ENCODE measurements at regions of chr2 and their contacts with region 1.

Region 1: GRCh38 chr2:151819920-151820319 is 8.3 kb downstream of the ARL5A start:
- DNase-seq: no peak
- ATAC-seq: peak; percentile 97
- H3K4me3 Mint-ChIP-seq: no peak overlapping the region
- H3K27ac Mint-ChIP-seq: peak overlapping the region; percentile 73
- H3K4me1 Mint-ChIP-seq: peaks cover 61% of the 10 kb centered on the region
- H3K27me3 Mint-ChIP-seq: no peaks in the 10 kb centered on the region

Region 2: GRCh38 chr2:150832686-150833085 is 987.2 kb before region 1 on chr2:
- CTCF ChIA-PET with region 1: no interaction called
- POLR2A ChIA-PET with region 1: no interaction called
- intact Hi-C with region 1: no loop called
- DNase-seq: no peak
- ATAC-seq: no peak
- H3K4me3 Mint-ChIP-seq: no peak overlapping the region
- H3K27ac Mint-ChIP-seq: no peak overlapping the region
- H3K4me1 Mint-ChIP-seq: no peaks in the 10 kb centered on the region
- H3K27me3 Mint-ChIP-seq: no peaks in the 10 kb centered on the region

Region 3: DNA sequence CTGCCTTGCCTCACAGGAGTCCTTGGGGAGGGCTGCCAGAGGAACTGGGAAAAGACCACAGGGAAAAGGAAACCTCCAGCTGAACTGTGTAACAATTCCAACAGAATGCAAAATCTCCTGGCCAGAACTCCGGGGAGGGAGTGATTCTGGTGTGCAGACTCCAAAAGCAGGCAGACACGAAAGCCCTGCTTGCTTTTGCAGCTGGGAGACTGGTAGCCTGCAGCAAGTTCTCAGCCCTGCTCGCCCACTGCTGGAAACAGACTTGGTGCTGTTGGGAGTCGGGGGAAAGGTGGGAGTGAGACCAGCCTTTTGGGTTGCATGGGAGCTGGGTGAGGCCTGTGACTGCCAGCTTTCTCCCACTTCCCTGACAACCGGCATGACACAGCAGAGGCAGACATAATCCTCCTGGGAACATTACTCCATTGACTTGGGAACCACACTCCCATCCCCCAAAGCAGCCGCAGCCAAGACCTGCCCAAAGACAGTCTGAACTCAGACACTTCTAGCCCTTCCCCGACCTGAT is 504.5 kb before region 1 on chr2:
- CTCF ChIA-PET with region 1: no interaction called
- POLR2A ChIA-PET with region 1: no interaction called
- intact Hi-C with region 1: no loop called
- DNase-seq: no peak
- ATAC-seq: no peak
- H3K4me3 Mint-ChIP-seq: no peak overlapping the region
- H3K27ac Mint-ChIP-seq: no peak overlapping the region
- H3K4me1 Mint-ChIP-seq: peaks cover 11% of the 10 kb centered on the region
- H3K27me3 Mint-ChIP-seq: no peaks in the 10 kb centered on the region

Region 4: DNA sequence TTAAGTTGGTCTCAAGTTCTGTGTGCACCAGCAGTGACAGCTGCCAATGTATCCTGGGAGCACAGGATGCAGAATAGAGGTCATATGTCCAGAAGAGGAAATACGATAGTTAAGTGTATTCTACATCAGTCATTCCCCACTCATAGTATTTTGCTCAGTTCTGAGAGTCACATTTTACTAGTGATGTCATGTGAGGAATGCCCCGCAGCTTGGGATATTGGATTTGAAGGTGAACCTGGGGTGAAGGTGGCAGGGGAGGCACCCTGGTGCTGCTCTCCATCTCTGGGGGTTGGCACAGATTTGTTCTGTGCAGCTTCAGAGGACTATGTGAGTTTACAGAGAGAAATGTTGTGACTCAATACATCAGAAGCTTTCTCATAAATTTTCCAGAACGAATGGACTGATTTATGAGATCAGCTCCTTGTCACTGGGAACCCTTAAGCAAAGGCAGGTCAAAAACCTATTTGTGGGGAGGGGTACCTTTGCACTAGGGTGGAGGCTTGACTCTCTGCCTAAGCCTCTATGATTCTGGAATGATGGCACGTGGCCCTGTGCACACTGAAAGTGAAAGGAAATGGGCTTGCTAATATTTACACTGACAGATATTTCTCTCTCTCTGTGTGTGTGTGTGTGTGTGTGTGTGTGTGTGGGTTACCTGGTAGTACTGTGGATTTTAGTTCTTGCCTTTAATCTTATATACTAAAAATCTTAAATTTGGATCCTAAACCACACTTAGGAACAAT is 181.6 kb before region 1 on chr2:
- CTCF ChIA-PET with region 1: interaction called, 3 read pairs
- POLR2A ChIA-PET with region 1: no interaction called
- intact Hi-C with region 1: loop called (anchors 5 kb)
- DNase-seq: peak; percentile 35
- ATAC-seq: peak; percentile 52
- H3K4me3 Mint-ChIP-seq: peak overlapping the region; percentile 19
- H3K27ac Mint-ChIP-seq: peak overlapping the region; percentile 79
- H3K4me1 Mint-ChIP-seq: peaks cover 31% of the 10 kb centered on the region
- H3K27me3 Mint-ChIP-seq: no peaks in the 10 kb centered on the region

Region 5: GRCh38 chr2:152890736-152891135 is 1070.8 kb after region 1 on chr2:
- CTCF ChIA-PET with region 1: no interaction called
- POLR2A ChIA-PET with region 1: no interaction called
- intact Hi-C with region 1: no loop called
- DNase-seq: no peak
- ATAC-seq: no peak
- H3K4me3 Mint-ChIP-seq: no peak overlapping the region
- H3K27ac Mint-ChIP-seq: no peak overlapping the region
- H3K4me1 Mint-ChIP-seq: no peaks in the 10 kb centered on the region
- H3K27me3 Mint-ChIP-seq: peaks cover 10% of the 10 kb centered on the region

Measured in activated CD4-positive, alpha-beta T cell treated with anti-CD3 and anti-CD28 coated beads for 36 hours (primary cell).